ENCODE measurements at regions of chr6 and their contacts with region 1.

Region 1: DNA sequence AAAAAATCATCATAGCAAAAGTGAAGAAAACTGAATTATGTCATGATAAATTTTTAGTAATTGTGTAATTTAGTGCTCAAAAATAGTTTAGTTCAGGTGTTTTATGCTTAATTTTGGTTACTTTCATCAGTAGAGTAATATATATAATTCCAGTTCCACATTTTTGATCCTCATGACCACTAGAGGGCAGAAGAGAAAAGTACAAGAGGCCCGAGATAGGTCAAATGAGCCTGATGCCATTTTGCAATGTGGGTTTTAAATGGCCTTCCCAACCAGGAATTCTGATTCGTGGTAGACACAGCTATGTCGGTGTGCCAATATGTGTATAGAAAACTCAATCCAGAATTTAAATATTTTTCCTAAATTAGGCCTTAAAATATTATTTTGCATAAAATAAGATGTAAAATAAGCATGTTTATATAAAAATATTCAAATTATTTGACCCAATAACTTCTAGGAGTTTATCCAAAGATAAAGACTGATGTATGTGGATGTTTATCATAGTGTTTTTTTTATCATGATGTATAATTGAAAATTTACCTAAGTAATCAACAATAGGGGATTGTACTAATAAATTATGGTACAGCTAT is 159.7 kb upstream of the RPS6KA2 start:
- DNase-seq: peak; percentile 14
- ATAC-seq: no peak
- H3K4me3 Mint-ChIP-seq: no peak overlapping the region
- H3K27ac Mint-ChIP-seq: no peak overlapping the region
- H3K4me1 Mint-ChIP-seq: no peaks in the 10 kb centered on the region
- H3K27me3 Mint-ChIP-seq: no peaks in the 10 kb centered on the region
- CTCF ChIP-seq: peak; percentile 91

Region 2: DNA sequence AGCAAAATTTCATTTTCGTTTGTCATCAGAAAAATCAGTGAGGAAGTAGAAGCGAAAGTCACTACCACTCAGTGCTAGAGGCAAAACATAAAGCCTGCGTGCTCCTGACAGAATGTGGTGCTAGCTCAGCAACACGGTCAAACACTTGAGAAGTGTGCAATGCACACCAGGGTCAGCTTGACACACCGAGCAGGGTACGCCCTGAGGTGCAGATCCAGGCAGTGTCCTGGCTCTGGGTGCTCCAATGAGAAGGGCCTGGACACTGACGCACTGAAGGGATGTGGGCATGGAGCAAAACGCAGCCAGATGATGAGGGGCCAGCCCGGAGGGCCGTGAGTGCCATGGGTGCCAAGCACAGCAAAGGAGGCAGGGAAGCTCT is 163.6 kb after region 1 on chr6:
- CTCF ChIA-PET with region 1: interaction called, 6 read pairs
- POLR2A ChIA-PET with region 1: no interaction called
- intact Hi-C with region 1: loop called (anchors 2 kb)
- DNase-seq: no peak
- ATAC-seq: no peak
- H3K4me3 Mint-ChIP-seq: peak overlapping the region; percentile 42
- H3K27ac Mint-ChIP-seq: peak overlapping the region; percentile 79
- H3K4me1 Mint-ChIP-seq: peaks cover 56% of the 10 kb centered on the region
- H3K27me3 Mint-ChIP-seq: no peaks in the 10 kb centered on the region
- CTCF ChIP-seq: no peak

Measured in activated CD8-positive, alpha-beta T cell treated with anti-CD3 and anti-CD28 coated beads for 36 hours (primary cell).